Heart right ventricle (tissue), 16 donors: ENCODE measurements at regions of chr5 and their contacts with region 1.

Region 1: GRCh38 chr5:138895918-138896317 is 20.8 kb upstream of the LRRTM2 start:
- DNase-seq: no peak
- ATAC-seq: no peak
- H3K4me3 ChIP-seq: no peak overlapping the region
- H3K27ac ChIP-seq: no peak overlapping the region
- H3K4me1 ChIP-seq: peaks cover 0 to 32% (median 16%) of the 10 kb centered on the region in 9 donors
- H3K27me3 ChIP-seq: no peaks in the 10 kb centered on the region
- CTCF ChIP-seq: no peak

Region 2: DNA sequence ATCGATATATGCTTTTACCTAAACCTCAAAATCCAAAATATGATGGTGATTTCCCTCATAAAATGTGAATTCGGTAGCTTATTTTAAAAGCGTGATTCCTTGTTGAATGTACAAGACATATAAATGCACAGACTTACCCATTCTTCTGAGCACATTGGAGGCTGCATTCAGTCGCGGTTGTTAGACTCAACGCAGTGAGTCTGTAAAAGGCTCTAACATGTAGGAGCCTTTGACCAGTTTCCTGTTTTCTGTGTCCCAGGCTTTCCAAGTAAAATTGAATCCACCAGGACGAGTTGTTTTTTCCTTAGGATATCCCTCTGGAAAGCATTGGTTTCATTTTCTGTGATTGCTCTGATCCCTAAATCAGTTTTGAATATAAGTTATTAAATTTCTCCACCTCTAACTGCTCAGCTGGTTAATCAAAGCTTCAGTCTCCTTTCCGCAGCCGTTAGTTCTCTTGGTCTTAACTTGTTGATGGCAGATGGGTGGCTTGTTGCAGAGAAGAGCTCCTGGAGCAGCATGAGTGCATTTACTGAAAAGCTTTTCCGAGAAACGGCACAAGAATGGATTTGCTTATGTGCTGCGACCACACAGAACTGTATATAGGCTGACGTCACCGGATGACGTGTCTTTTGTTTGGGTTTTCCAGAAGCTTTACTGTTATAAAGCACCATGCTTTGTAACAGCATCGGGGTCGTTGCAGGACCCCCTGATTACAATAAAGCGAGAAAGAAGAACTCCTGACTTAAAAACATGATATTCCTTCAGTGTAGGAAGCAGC is 21.0 kb before region 1 on chr5 and contains the start of gene LRRTM2:
- intact Hi-C with region 1: loop called in 1 of 10 experiments (anchors 1 kb)
- DNase-seq: no peak
- ATAC-seq: no peak
- H3K4me3 ChIP-seq: peak within 1 kb of the TSS in 2 of 10 donors; percentile 12
- H3K27ac ChIP-seq: no peak within 1 kb of the TSS
- H3K4me1 ChIP-seq: peaks cover 7 to 82% (median 56%) of the 10 kb centered on the region in 9 donors
- H3K27me3 ChIP-seq: no peaks in the 10 kb centered on the region
- CTCF ChIP-seq: no peak
- total RNA-seq, gene LRRTM2: 0.07 to 0.49 (median 0.17) TPM in 4 of 10 donors, not detected in the others

Region 3: GRCh38 chr5:138944527-138945322 is 48.8 kb after region 1 on chr5:
- intact Hi-C with region 1: no loop called
- DNase-seq: no peak
- ATAC-seq: no peak
- H3K4me3 ChIP-seq: no peak overlapping the region
- H3K27ac ChIP-seq: no peak overlapping the region
- H3K4me1 ChIP-seq: peaks cover 3 to 39% (median 24%) of the 10 kb centered on the region in 9 donors
- H3K27me3 ChIP-seq: no peaks in the 10 kb centered on the region
- CTCF ChIP-seq: no peak

Region 4: DNA sequence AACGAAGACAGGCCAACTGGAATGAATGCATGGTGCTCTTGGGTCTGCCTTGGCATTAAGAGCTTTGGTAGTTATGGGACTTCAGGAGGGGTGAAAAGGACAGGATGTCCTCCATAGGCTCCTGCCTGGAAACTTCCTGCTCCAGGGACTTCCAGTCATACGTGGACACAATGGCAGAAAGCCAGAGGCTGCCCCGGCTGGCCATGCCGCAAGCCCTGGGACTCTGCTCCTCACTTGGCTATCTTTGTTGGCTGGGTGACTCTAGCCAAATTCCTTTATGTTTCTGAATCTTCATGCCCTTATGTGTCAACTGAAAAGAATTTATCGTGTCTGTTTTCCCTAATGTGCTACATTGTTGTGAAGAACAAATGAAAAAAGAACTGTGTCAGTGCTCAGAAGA is 165.4 kb after region 1 on chr5:
- intact Hi-C with region 1: no loop called
- DNase-seq: peak; percentile 48
- ATAC-seq: peak in 7 of 8 donors; percentile 58 to 94 (median 86)
- H3K4me3 ChIP-seq: no peak overlapping the region
- H3K27ac ChIP-seq: peak overlapping the region in 6 of 10 donors; percentile 14 to 74 (median 23)
- H3K4me1 ChIP-seq: peaks cover 0 to 29% (median 19%) of the 10 kb centered on the region in 9 donors
- H3K27me3 ChIP-seq: no peaks in the 10 kb centered on the region
- CTCF ChIP-seq: no peak